ENCODE measurements at regions of chr6 and their contacts with region 1.

Region 1: GRCh38 chr6:77457720-77458349 is 5.5 kb downstream of the HTR1B start:
- DNase-seq: peak; percentile 67 to 76
- H3K4me3 ChIP-seq: no peak overlapping the region
- H3K4me3 Mint-ChIP-seq: no peak overlapping the region
- H3K27ac Mint-ChIP-seq: no peak overlapping the region
- H3K4me1 ChIP-seq: 0 out of 2 replicates have a peak, but pooled peaks cover 12% of the 10 kb centered on the region
- H3K4me1 Mint-ChIP-seq: no peaks in the 10 kb centered on the region
- H3K27me3 ChIP-seq: no peaks in the 10 kb centered on the region
- H3K27me3 Mint-ChIP-seq: peaks cover 3% of the 10 kb centered on the region
- CTCF ChIP-seq: peak; percentile 68 to 70

Region 2: DNA sequence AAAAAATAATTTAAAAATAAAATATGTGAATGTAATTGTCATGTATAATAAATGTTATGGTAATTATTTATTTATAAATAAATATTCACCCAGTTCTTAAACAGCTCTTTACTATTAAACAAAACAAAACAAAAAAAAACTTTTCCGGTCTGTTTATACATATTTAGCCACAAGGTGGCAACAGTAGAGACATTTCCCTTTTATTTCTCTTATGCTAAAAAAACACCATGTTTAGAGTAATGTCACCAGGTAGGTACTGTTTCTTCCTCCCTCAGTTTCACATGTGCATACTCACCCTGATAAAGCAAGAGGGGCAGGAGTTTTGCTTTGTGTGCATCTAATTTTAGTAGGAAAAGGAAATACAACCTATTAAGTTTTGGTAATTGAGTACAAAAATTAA is 775.0 kb before region 1 on chr6:
- CTCF ChIA-PET with region 1: no interaction called
- POLR2A ChIA-PET with region 1: no interaction called
- intact Hi-C with region 1: loop called (anchors 2 kb)
- DNase-seq: no peak
- H3K4me3 ChIP-seq: no peak overlapping the region
- H3K4me3 Mint-ChIP-seq: no peak overlapping the region
- H3K27ac Mint-ChIP-seq: no peak overlapping the region
- H3K4me1 ChIP-seq: no peaks in the 10 kb centered on the region
- H3K4me1 Mint-ChIP-seq: no peaks in the 10 kb centered on the region
- H3K27me3 ChIP-seq: no peaks in the 10 kb centered on the region
- H3K27me3 Mint-ChIP-seq: peaks cover 6% of the 10 kb centered on the region
- CTCF ChIP-seq: peak; percentile 23 to 30

Region 3: DNA sequence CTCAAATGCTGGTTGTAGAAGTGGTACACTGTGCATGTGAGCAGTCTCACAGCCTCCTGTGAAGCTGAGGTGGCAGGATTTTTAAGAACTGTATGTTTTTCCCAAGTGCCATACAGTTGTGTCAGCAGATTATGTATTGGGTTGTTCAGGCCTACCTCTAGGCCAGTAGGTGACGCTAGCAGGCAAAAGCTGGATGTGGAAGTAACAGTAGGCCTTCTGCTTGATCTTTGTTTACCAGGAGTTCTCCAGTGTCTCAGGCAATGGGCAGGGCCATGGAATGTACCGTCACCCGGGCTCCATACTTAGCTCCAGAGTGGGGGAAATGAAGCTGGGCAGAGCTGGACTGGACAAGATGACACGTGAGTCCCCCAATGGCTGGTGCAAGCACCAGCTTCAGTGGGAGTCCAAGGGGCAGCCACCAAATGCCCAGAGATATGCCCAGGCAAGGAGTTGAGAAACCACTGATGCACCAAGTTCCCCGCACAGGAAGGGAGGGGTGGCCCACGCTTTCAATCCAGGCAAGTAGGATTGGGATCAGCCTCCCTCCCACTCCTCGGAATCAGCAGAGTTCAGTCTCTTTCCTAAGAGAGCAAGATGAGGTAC is 284.3 kb before region 1 on chr6:
- CTCF ChIA-PET with region 1: no interaction called
- POLR2A ChIA-PET with region 1: no interaction called
- intact Hi-C with region 1: loop called (anchors 1 kb)
- DNase-seq: peak in 1 of 2 experiments; percentile 6
- H3K4me3 ChIP-seq: no peak overlapping the region
- H3K4me3 Mint-ChIP-seq: no peak overlapping the region
- H3K27ac Mint-ChIP-seq: no peak overlapping the region
- H3K4me1 ChIP-seq: no peaks in the 10 kb centered on the region
- H3K4me1 Mint-ChIP-seq: no peaks in the 10 kb centered on the region
- H3K27me3 ChIP-seq: no peaks in the 10 kb centered on the region
- H3K27me3 Mint-ChIP-seq: no peaks in the 10 kb centered on the region
- CTCF ChIP-seq: no peak

Region 4: DNA sequence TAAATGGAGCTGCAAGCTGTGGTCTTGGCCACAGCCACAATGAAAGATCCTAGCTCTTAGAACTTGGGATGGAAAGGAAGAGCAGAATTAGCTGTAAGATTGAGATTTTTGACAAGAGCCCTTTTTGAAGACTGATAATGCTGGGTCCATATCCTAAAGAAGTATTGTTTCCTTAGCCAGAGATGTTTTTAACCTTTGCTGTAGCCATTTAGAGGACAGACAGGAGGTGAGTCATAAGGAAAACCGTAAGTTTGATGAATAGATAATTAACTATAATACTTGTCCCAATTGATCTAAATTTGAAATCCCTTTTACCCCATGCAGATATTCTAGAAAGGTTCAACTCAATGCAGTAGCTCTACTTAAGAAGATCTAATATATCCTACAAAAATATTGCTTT is 208.3 kb before region 1 on chr6:
- CTCF ChIA-PET with region 1: interaction called, 3 read pairs
- POLR2A ChIA-PET with region 1: no interaction called
- intact Hi-C with region 1: loop called (anchors 2 kb)
- DNase-seq: no peak
- H3K4me3 ChIP-seq: no peak overlapping the region
- H3K4me3 Mint-ChIP-seq: no peak overlapping the region
- H3K27ac Mint-ChIP-seq: no peak overlapping the region
- H3K4me1 ChIP-seq: no peaks in the 10 kb centered on the region
- H3K4me1 Mint-ChIP-seq: no peaks in the 10 kb centered on the region
- H3K27me3 ChIP-seq: no peaks in the 10 kb centered on the region
- H3K27me3 Mint-ChIP-seq: peaks cover 3% of the 10 kb centered on the region
- CTCF ChIP-seq: no peak

Region 5: GRCh38 chr6:77339926-77340325 is 117.9 kb before region 1 on chr6:
- CTCF ChIA-PET with region 1: no interaction called
- POLR2A ChIA-PET with region 1: no interaction called
- intact Hi-C with region 1: loop called (anchors 1 kb)
- DNase-seq: no peak
- H3K4me3 ChIP-seq: no peak overlapping the region
- H3K4me3 Mint-ChIP-seq: no peak overlapping the region
- H3K27ac Mint-ChIP-seq: no peak overlapping the region
- H3K4me1 ChIP-seq: no peaks in the 10 kb centered on the region
- H3K4me1 Mint-ChIP-seq: no peaks in the 10 kb centered on the region
- H3K27me3 ChIP-seq: no peaks in the 10 kb centered on the region
- H3K27me3 Mint-ChIP-seq: no peaks in the 10 kb centered on the region
- CTCF ChIP-seq: no peak

Region 6: DNA sequence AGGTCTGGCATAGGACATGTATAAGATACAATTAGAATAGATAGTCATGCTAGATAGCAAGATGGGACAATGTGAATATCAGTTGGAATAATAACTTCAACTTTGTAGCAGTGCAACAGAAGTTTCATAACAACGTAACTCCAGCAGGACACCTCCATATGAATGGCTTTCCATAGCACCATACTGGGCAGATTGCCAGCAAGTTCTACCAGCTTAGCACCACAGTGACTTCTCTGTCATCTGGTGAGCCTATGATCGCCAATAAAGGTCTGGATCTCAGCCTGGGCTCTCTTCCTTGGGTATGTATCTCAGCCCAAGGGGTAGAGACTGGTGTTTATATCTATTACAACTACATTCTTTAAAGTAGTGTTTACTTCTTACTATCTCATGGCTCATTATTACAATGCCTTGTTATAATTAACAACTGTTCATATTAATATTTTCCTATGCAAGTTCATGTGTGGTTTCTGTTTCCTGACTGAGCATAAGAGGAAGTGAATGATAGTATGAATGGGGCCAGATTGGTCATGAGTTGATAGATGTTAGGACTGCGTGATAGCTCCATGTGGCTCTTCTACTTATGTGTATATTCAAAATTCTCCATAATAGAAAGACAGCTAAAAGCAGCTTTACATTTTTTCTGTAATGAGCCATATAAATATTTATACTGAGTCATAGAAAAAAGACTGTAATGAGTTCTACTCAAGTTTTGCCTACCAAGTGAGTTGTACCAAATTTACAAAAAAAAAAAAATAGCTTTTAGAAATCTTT is 17.4 kb before region 1 on chr6:
- CTCF ChIA-PET with region 1: no interaction called
- POLR2A ChIA-PET with region 1: no interaction called
- intact Hi-C with region 1: no loop called
- DNase-seq: no peak
- H3K4me3 ChIP-seq: no peak overlapping the region
- H3K4me3 Mint-ChIP-seq: no peak overlapping the region
- H3K27ac Mint-ChIP-seq: no peak overlapping the region
- H3K4me1 ChIP-seq: no peaks in the 10 kb centered on the region
- H3K4me1 Mint-ChIP-seq: no peaks in the 10 kb centered on the region
- H3K27me3 ChIP-seq: no peaks in the 10 kb centered on the region
- H3K27me3 Mint-ChIP-seq: peaks cover 3% of the 10 kb centered on the region
- CTCF ChIP-seq: no peak

Region 7: DNA sequence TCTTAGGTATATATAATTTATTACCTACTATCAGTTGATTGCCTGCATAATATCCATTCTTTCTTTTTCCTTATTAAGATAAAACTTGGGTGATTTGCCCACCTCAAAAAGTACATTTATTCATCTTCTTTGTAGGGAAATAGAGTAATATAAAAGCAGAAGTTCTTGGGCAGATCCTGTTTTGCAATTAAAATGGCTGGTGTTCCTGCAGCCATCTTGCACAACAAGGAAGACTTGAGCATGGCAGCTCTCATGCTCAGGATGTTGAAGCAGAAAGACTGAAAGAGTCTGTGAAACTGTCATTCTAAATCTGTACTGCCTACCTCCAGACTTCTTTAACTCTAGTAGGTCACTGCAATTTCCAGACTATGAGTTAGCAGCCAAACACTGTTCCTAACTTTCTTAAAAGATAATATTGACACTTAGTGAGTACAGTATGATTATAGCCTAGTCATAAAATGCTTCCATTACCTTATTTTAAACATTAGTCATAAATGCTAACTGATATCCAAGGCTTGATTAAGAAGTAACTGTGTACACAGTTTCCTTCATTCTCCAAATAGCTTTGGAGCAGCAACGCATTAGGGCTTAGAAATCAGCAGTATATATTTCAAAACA is 30.1 kb after region 1 on chr6:
- CTCF ChIA-PET with region 1: no interaction called
- POLR2A ChIA-PET with region 1: no interaction called
- intact Hi-C with region 1: no loop called
- DNase-seq: no peak
- H3K4me3 ChIP-seq: no peak overlapping the region
- H3K4me3 Mint-ChIP-seq: no peak overlapping the region
- H3K27ac Mint-ChIP-seq: no peak overlapping the region
- H3K4me1 ChIP-seq: no peaks in the 10 kb centered on the region
- H3K4me1 Mint-ChIP-seq: no peaks in the 10 kb centered on the region
- H3K27me3 ChIP-seq: no peaks in the 10 kb centered on the region
- H3K27me3 Mint-ChIP-seq: no peaks in the 10 kb centered on the region
- CTCF ChIP-seq: no peak